ENCODE measurements at regions of chr20 and their contacts with region 1.

Region 1: GRCh38 chr20:21235484-21236445 is 67.4 kb upstream of the XRN2 start:
- H3K4me3 ChIP-seq: no peak overlapping the region
- H3K27ac ChIP-seq: no peak overlapping the region
- H3K4me1 ChIP-seq: no peaks in the 10 kb centered on the region
- CTCF ChIP-seq: peak; percentile 60

Region 2: DNA sequence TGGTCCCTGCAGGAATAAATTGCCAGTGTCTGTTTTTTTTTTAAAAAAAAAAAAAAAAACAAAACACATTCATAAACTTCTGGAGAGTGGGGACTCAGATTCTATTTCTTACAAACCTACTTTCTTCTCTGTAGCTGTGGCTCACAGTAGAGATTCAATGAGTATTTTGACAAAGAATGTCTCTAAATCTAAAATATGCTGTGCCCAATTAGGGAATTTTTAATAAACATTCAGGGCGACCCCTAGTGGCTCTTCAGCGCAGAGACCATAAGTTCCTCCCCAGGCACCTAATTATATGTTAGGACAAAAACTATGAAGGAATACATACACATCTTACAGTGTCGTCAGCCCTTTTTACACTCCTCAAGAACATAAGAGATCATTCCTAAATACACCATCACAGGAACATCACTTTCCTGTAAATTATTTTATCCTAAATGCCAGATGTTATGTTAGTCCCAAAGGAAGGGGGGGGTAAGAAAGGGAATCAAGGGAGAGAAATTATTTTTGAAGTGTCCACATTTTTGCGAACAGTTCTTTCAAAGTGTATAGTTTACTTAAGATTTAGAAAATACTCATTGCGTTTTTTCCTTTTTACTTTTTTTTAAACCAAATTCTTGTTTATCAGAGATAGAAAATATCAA is 1240.4 kb before region 1 on chr20:
- CTCF ChIA-PET with region 1: no interaction called
- POLR2A ChIA-PET with region 1: no interaction called
- H3K4me3 ChIP-seq: no peak overlapping the region
- H3K27ac ChIP-seq: no peak overlapping the region
- H3K4me1 ChIP-seq: peaks cover 13% of the 10 kb centered on the region
- CTCF ChIP-seq: no peak

Region 3: DNA sequence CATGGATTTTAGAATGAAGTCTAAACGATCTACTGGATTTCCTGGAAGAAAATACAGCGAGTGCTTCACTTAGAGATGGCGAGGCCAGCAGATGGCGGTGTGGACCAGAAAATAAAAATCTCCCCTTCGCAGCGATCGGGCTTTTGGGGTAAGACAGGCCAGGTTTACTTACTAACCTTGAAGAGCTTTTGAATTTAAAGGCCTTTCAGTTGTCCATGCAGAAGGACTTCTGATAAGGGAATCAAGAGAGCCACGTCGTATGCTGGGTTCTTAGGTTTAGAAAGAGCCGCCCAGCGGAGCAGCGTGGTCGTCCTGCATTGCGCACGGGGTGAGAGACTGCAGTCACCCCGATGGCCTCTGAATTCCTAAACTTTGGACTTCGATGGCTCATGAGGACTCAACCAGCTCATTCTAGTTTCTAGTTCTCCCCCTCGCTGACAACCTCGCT is 398.2 kb before region 1 on chr20:
- CTCF ChIA-PET with region 1: interaction called, 46 read pairs
- POLR2A ChIA-PET with region 1: no interaction called
- H3K4me3 ChIP-seq: no peak overlapping the region
- H3K27ac ChIP-seq: no peak overlapping the region
- H3K4me1 ChIP-seq: no peaks in the 10 kb centered on the region
- CTCF ChIP-seq: peak; percentile 51; the same call in 1 of the 2 replicates

Region 4: DNA sequence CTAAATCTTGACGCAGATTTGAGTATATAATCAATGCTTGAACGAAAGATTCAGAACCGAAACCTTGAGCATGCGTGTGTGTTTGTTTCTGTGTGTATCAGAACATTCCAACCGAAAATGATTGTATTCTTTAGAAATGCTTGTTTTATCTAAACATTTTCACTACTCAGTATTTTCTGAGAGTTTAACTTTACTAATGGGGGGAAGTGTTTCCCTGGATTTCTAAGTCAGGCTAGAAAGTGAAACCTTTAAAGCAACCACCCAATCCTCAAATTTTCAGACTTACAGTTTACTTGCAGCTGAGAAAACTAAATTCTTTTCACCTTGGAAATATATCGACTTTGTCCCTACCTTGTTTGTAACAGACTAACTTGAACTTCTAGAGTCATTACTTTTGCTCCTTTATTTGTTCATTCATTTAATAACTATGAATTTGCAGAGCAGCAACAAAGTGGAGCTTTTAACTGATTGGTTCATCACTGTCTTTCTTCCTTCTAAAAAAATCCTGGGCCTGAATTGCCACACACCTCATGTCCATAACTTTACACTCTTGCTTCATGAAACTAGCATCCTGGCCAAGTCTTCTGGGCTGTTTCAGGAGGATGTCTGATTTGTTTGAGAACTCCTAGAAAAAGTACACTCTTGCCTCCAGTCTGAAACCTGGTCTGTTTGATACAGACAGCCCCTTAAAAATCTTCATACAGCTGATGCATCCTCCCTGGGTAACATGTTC is 10.4 kb before region 1 on chr20:
- CTCF ChIA-PET with region 1: interaction called, 15 read pairs
- POLR2A ChIA-PET with region 1: no interaction called
- H3K4me3 ChIP-seq: no peak overlapping the region
- H3K27ac ChIP-seq: no peak overlapping the region
- H3K4me1 ChIP-seq: no peaks in the 10 kb centered on the region
- CTCF ChIP-seq: no peak

Region 5: GRCh38 chr20:21490095-21490494 is 254.3 kb after region 1 on chr20:
- CTCF ChIA-PET with region 1: interaction called, 18 read pairs
- POLR2A ChIA-PET with region 1: no interaction called
- H3K4me3 ChIP-seq: no peak overlapping the region
- H3K27ac ChIP-seq: no peak overlapping the region
- H3K4me1 ChIP-seq: no peaks in the 10 kb centered on the region
- CTCF ChIP-seq: no peak

Region 6: DNA sequence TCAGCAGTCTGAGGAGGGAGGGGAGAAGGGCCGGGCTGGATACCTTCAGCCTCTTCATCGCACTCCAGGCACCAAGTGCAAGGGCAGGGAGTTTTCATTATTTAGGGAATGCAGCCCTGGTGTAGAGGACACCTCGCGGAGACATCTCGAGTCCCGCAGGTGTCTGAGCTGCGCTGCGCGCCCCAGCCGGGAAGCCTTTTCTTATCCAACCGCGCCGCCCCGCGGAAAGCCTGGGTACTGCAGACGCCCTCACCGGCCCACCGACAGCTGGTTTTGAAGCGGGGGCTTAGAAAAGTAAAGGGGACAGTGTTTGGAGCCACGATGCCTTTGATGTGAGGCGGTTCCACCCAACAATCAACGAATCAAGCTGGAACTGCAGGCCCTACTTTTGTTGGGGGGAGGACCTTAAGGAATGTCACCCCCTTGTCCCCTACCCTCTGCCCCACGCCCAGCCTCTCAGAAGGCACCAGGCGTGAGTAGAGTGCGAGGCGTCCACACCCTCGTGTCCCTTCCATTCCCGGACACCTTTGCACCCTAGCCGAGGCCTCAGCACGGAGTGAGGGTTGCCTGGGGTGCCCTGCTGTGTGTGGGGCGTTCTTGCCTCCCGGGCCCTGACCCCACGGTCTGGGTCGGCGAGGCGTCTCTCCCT is 269.5 kb after region 1 on chr20:
- CTCF ChIA-PET with region 1: interaction called, 150 read pairs
- POLR2A ChIA-PET with region 1: interaction called, 5 read pairs
- H3K4me3 ChIP-seq: peak overlapping the region; percentile 53
- H3K27ac ChIP-seq: peak overlapping the region; percentile 56; the same call in 1 of the 2 replicates
- H3K4me1 ChIP-seq: no peaks in the 10 kb centered on the region
- CTCF ChIP-seq: peak; percentile 89

Region 7: DNA sequence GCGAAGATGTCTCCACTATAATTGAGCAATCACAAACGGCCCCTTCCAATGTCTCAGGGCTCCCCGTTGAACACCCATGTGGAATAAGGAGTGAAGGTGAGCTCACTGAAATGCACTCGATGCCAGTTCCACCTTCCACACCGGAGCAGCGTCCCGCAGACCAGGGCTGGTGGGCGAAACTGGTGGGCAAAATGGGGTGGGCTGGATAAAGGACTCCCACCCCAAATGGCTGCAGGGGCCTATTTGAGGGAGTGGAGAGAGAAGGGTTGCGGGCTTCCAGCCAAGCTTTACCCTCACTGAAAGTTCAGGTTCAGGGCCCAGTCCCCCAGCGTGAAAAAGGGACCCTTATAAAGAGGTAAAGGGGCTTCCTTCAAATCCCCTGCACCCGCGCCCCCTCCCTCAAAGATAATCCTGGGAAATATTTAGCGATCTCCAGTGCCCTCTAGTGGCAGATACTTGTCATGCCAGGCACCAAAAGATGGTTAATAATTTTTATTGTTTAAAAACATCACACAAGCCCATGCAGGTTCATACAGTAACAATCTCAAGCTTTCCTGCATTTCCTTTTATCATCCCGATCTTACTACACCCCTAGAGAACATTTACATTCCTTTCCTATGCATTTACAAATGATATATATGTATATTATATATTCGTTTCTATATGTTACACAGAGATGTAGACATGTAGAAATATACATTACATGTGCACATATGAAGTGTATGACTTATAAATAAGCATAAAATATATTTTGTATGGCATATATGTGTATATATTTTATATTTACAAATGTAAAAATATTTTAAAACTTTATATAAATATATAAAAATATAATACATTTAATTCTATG is 336.3 kb after region 1 on chr20:
- CTCF ChIA-PET with region 1: interaction called, 32 read pairs
- POLR2A ChIA-PET with region 1: no interaction called
- H3K4me3 ChIP-seq: no peak overlapping the region
- H3K27ac ChIP-seq: no peak overlapping the region
- H3K4me1 ChIP-seq: no peaks in the 10 kb centered on the region
- CTCF ChIP-seq: peak; percentile 50

Region 8: DNA sequence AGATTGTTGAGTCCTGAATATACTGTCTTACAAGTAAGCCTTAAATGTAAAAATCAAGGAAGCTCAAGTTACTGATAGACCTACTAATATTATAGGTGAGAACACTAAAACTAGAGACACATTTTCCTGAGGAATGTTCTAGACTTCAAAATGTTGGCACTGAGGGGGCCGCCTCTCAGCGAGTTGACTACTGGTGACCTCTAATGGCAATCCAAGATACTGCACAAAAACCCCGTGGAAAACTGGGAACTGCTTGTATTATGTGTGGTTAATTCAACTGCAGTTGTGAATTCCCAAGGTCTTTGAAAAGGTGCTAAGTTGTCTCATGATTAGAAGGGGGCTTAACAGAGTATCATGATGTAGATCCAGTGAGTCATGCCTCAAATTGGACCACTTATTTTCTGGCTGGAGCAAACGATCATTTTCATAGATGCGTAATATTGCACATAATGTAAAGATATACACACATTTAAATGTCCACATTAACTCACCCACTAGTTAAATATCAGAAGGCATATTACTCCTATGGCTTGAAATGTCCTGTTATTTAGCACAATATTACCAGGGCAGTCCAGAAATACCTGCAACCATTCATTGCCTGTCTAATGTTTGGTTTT is 1012.4 kb after region 1 on chr20:
- CTCF ChIA-PET with region 1: no interaction called
- POLR2A ChIA-PET with region 1: no interaction called
- H3K4me3 ChIP-seq: no peak overlapping the region
- H3K27ac ChIP-seq: no peak overlapping the region
- H3K4me1 ChIP-seq: no peaks in the 10 kb centered on the region
- CTCF ChIP-seq: no peak

Measured in HEK293 (cell line).